A673 (cell line): ENCODE measurements at regions of chr5 and their contacts with region 1.

Region 1: GRCh38 chr5:170429014-170429413 is 39.8 kb upstream of the KCNMB1 start:
- DNase-seq: peak; percentile 46
- H3K4me3 ChIP-seq: no peak overlapping the region
- H3K27ac ChIP-seq: no peak overlapping the region
- H3K4me1 ChIP-seq: peaks cover 14% of the 10 kb centered on the region
- H3K27me3 ChIP-seq: no peaks in the 10 kb centered on the region
- CTCF ChIP-seq: peak; percentile 28; the same call in 1 of the 2 replicates

Region 2: GRCh38 chr5:169970911-169971765 is 457.9 kb before region 1 on chr5:
- CTCF ChIA-PET with region 1: no interaction called
- POLR2A ChIA-PET with region 1: interaction called, 16 read pairs
- intact Hi-C with region 1: no loop called
- DNase-seq: peak; percentile 81
- H3K4me3 ChIP-seq: no peak overlapping the region
- H3K27ac ChIP-seq: peak overlapping the region; percentile 71
- H3K4me1 ChIP-seq: peaks cover 25% of the 10 kb centered on the region
- H3K27me3 ChIP-seq: no peaks in the 10 kb centered on the region
- CTCF ChIP-seq: no peak

Region 3: GRCh38 chr5:170100066-170100943 is 328.7 kb before region 1 on chr5:
- CTCF ChIA-PET with region 1: no interaction called
- POLR2A ChIA-PET with region 1: no interaction called
- intact Hi-C with region 1: loop called (anchors 5 kb)
- DNase-seq: peak; percentile 86
- H3K4me3 ChIP-seq: no peak overlapping the region
- H3K27ac ChIP-seq: no peak overlapping the region
- H3K4me1 ChIP-seq: no peaks in the 10 kb centered on the region
- H3K27me3 ChIP-seq: no peaks in the 10 kb centered on the region
- CTCF ChIP-seq: peak; percentile 71

Region 4: DNA sequence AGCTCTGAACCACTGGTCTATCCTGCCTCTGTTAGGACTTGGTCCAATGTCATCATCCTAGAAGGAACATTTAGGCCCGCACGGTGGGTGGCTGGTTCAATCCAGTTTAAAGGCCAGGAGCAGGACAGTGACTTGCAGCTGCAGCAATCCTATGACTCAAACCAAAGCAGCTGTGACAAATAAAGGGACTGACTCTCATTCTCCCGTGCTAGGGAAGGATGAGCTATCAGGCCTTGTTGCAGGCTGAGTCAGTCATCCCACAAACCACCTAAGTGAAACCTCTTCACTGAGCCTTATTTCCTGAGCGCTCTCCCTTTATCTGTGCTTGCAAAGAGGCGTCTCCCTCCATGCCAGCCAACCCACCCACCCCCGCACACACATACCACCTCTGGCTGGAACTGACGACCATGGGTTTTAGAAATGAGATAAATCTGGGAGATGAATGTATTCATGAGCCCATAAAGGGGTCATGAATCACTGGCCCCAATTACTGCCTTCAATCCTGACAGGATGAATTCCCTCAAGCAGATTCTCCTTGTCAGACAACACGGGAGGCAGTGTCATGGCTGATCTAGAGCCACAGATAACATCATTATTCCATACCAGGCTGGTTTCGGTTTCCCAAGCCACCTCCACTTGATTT is 168.2 kb after region 1 on chr5:
- CTCF ChIA-PET with region 1: no interaction called
- POLR2A ChIA-PET with region 1: no interaction called
- intact Hi-C with region 1: no loop called
- DNase-seq: peak; percentile 14
- H3K4me3 ChIP-seq: no peak overlapping the region
- H3K27ac ChIP-seq: no peak overlapping the region
- H3K4me1 ChIP-seq: no peaks in the 10 kb centered on the region
- H3K27me3 ChIP-seq: no peaks in the 10 kb centered on the region
- CTCF ChIP-seq: no peak

Region 5: GRCh38 chr5:170640731-170641588 is 211.9 kb after region 1 on chr5:
- CTCF ChIA-PET with region 1: no interaction called
- POLR2A ChIA-PET with region 1: no interaction called
- intact Hi-C with region 1: no loop called
- DNase-seq: no peak
- H3K4me3 ChIP-seq: no peak overlapping the region
- H3K27ac ChIP-seq: no peak overlapping the region
- H3K4me1 ChIP-seq: no peaks in the 10 kb centered on the region
- H3K27me3 ChIP-seq: no peaks in the 10 kb centered on the region
- CTCF ChIP-seq: no peak